ENCODE measurements at regions of chr3 and their contacts with region 1.

Region 1: DNA sequence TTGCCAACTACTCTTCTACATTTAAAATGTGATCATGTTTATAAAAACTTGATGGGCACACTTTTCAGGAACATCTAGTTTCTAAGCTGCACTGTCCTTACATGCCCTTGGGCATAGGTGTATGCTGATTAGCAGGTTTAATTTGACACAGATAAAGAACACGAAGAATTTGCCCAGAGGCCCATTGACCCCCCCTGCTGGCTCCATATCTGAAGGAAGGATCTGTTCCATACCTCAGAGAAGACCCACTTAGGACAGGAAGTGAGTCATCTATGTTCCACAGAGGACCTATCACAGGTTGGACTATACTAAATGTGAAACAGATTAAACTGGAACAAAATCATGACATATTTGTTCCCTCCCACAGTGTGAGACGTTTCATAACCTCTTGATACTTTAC is 92.8 kb upstream of the LPP start:
- DNase-seq: no peak
- ATAC-seq: no peak
- H3K4me3 ChIP-seq: no peak overlapping the region
- H3K27ac ChIP-seq: no peak overlapping the region
- H3K4me1 ChIP-seq: no peaks in the 10 kb centered on the region
- H3K27me3 ChIP-seq: no peaks in the 10 kb centered on the region

Region 2: GRCh38 chr3:187955076-187955952 is 105.8 kb before region 1 on chr3:
- intact Hi-C with region 1: no loop called
- DNase-seq: peak in 1 of 2 donors; percentile 51
- ATAC-seq: peak; percentile 84
- H3K4me3 ChIP-seq: no peak overlapping the region
- H3K27ac ChIP-seq: no peak overlapping the region
- H3K4me1 ChIP-seq: no peaks in the 10 kb centered on the region
- H3K27me3 ChIP-seq: no peaks in the 10 kb centered on the region

Region 3: DNA sequence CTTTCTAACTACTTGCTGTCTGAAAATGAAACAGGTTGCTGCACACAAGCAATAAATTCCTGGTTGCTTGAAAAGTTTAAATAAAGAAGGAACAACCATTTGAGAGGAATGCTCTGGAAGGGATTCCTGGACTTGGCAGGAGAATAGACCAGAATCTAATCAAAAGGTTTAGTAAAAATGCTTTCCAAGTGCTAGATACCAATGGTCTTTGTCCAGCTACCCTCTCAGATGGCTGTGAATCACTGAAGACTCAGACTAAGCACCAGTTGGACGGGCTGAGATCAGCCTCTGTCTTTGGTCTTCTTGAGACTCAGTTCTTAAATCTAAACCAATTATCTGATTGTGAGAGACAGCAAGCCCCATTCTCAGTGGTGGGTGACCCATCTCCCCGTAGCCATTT is 65.1 kb after region 1 on chr3:
- intact Hi-C with region 1: loop called in 1 of 2 experiments (anchors 5 kb)
- DNase-seq: no peak
- ATAC-seq: no peak
- H3K4me3 ChIP-seq: no peak overlapping the region
- H3K27ac ChIP-seq: peak overlapping the region; percentile 23 to 88
- H3K4me1 ChIP-seq: peaks cover 3% of the 10 kb centered on the region in 2 donors
- H3K27me3 ChIP-seq: no peaks in the 10 kb centered on the region

Region 4: GRCh38 chr3:188137051-188137450 is 75.9 kb after region 1 on chr3:
- intact Hi-C with region 1: loop called in 1 of 2 experiments (anchors 5 kb)
- DNase-seq: no peak
- ATAC-seq: no peak
- H3K4me3 ChIP-seq: no peak overlapping the region
- H3K27ac ChIP-seq: no peak overlapping the region
- H3K4me1 ChIP-seq: peaks cover 0 to 2% of the 10 kb centered on the region in 2 donors
- H3K27me3 ChIP-seq: no peaks in the 10 kb centered on the region

Measured in aorta (tissue), 5 donors.